ENCODE measurements at regions of chr6 and their contacts with region 1.

Region 1: DNA sequence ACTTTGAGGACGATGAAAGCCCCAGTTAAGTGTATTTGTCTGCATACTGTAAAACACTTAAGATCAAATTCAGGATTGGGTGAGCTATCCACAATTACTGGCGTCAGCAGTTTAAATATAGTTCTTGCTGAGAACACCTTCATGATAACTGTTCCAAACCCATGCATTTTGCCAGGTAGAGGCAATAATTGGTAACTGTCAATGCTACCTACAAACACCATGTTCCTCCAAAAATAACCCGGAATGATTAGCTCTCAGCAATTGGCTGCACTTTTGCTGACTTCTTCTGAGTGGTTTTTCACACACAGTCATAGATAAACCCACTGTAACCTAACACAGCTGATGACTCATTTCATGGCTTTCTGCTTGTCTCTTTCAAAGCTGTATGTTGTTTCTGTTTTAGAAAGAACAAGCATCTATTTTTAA is 1358.6 kb upstream of the GJE1 start:
- DNase-seq: no peak

Region 2: GRCh38 chr6:140537819-140538705 is 236.0 kb before region 1 on chr6:
- intact Hi-C with region 1: loop called (anchors 10 kb)
- DNase-seq: no peak